ENCODE measurements at regions of chr2 and their contacts with region 1.

Region 1: GRCh38 chr2:207275779-207276178 is 110.0 kb upstream of the KLF7 start:
- DNase-seq: no peak
- H3K4me3 ChIP-seq: no peak overlapping the region
- H3K4me3 Mint-ChIP-seq: no peak overlapping the region
- H3K27ac Mint-ChIP-seq: no peak overlapping the region
- H3K4me1 ChIP-seq: no peaks in the 10 kb centered on the region
- H3K4me1 Mint-ChIP-seq: no peaks in the 10 kb centered on the region
- H3K27me3 ChIP-seq: no peaks in the 10 kb centered on the region
- H3K27me3 Mint-ChIP-seq: no peaks in the 10 kb centered on the region
- CTCF ChIP-seq: no peak

Region 2: DNA sequence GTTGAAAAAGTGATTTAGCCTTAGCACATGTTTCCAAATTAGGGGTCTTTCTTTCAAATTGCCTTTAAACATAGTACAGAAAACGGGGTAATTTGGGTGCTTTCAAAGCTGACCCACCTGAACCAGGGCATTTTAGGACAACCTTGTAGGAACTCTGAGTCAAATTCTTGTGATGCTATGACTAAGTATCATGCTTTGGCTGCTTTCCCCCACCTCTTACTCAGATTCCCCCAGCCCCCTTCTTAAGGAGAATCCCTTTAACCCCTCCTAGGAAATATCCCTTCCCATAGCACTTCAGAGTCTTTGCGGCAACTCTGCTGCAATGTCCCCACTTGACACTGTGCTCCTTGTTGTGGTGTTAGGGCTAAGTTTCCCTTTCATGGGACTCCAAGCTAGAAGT is 91.4 kb before region 1 on chr2:
- CTCF ChIA-PET with region 1: no interaction called
- POLR2A ChIA-PET with region 1: no interaction called
- intact Hi-C with region 1: no loop called
- DNase-seq: no peak
- H3K4me3 ChIP-seq: no peak overlapping the region
- H3K4me3 Mint-ChIP-seq: no peak overlapping the region
- H3K27ac Mint-ChIP-seq: no peak overlapping the region
- H3K4me1 ChIP-seq: no peaks in the 10 kb centered on the region
- H3K4me1 Mint-ChIP-seq: no peaks in the 10 kb centered on the region
- H3K27me3 ChIP-seq: no peaks in the 10 kb centered on the region
- H3K27me3 Mint-ChIP-seq: peaks cover 9% of the 10 kb centered on the region
- CTCF ChIP-seq: no peak

Region 3: GRCh38 chr2:207304761-207305160 is 29.0 kb after region 1 on chr2:
- CTCF ChIA-PET with region 1: no interaction called
- POLR2A ChIA-PET with region 1: no interaction called
- intact Hi-C with region 1: loop called (anchors 1 kb)
- DNase-seq: no peak
- H3K4me3 ChIP-seq: no peak overlapping the region
- H3K4me3 Mint-ChIP-seq: no peak overlapping the region
- H3K27ac Mint-ChIP-seq: no peak overlapping the region
- H3K4me1 ChIP-seq: no peaks in the 10 kb centered on the region
- H3K4me1 Mint-ChIP-seq: no peaks in the 10 kb centered on the region
- H3K27me3 ChIP-seq: no peaks in the 10 kb centered on the region
- H3K27me3 Mint-ChIP-seq: peaks cover 25% of the 10 kb centered on the region
- CTCF ChIP-seq: no peak